ENCODE measurements at regions of chr2 and their contacts with region 1.

Region 1: DNA sequence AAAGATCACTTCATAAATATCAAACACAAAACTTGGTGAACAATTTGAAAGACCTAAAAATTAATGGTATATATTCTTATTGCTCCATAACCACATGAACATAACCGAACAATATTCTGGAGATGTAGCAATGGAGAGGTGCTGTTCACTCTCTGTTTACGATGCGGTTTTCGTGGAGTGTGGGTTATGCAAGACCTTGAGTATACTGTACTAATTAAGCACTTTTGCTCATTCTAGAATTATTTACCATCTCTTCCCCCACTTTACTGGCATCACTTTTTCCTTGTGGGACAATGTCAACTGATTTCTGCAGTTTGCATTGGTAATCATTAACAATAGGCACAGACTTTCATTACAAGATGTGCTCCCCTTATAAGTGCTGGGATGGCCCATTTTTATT is 97.6 kb downstream of the RAPH1 start:
- DNase-seq: no peak
- ATAC-seq: no peak
- H3K4me3 ChIP-seq: no peak overlapping the region
- H3K27ac ChIP-seq: no peak overlapping the region
- H3K4me1 ChIP-seq: no peaks in the 10 kb centered on the region
- H3K27me3 ChIP-seq: no peaks in the 10 kb centered on the region
- CTCF ChIP-seq: no peak

Region 2: DNA sequence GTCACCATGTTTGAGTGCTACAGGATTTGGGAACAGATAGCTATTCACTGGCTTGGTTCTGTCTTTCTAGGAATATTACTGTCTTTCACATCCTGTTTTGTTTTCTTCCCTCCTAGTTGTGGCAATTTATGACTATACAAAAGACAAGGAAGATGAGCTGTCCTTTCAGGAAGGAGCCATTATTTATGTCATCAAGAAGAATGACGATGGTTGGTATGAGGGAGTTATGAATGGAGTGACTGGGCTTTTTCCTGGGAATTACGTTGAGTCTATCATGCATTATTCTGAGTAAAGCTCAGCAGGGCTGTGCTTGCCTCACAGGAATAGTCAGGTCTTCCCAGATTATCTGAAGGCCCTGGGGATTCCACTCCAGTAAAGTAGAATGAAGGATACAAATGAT is 10.4 kb before region 1 on chr2:
- CTCF ChIA-PET with region 1: no interaction called
- POLR2A ChIA-PET with region 1: no interaction called
- intact Hi-C with region 1: loop called (anchors 1 kb)
- DNase-seq: peak; percentile 14
- ATAC-seq: no peak; the same call in 1 of the 2 replicates
- H3K4me3 ChIP-seq: no peak overlapping the region
- H3K27ac ChIP-seq: 0 out of 2 replicates have a peak overlapping the region, but pooled peaks have one; percentile 8
- H3K4me1 ChIP-seq: no peaks in the 10 kb centered on the region
- H3K27me3 ChIP-seq: no peaks in the 10 kb centered on the region
- CTCF ChIP-seq: no peak

Measured in PC-3 (cell line).